Activated CD8-positive, alpha-beta T cell treated with anti-CD3 and anti-CD28 coated beads, Interleukin-2, amount 10 ng/mL, durations not matched to agents 7 days and 5 days (primary cell): ENCODE measurements at regions of chr12 and their contacts with region 1.

Region 1: DNA sequence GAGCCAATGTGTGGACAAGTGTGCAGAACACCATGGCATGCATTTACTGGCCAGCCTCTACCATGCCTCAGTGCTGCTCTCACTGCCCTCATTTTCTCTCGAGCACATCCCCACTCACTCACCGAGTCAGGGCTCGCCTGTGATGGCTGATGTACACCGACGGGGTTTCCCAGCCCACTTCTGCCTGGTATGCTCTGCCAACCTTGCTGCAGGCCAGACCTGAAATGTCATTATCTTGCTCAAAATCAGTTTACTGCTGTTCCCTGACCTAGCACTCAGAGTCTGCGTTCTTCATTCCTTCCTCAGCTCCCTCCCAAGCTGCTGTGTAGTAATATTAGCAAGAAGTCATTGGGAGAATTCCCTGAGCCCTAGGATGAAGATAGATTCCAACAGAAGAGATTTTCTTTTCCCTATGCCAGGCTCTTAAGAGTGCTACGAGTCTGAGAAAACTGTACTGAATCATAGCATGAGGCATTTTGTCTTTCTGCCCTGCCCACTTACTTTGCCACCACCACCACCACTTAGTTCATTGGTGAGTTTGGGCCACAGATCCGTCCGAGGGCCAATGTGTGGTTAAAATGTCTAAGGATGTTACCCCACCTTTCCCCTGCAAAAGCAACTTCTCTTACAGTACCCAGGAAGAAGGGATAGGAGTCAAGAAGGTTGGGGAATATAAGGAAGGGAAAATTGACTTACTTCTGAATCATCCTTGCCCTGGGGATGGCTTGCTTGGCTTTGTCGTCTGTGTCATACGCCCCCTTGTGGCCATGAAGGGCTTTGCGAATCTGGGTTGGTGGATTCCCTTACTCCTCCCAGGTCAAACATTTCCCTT is 51.0 kb downstream of the BMAL2 start:
- DNase-seq: peak; percentile 80
- ATAC-seq: peak; percentile 76
- H3K4me3 Mint-ChIP-seq: no peak overlapping the region
- H3K27ac Mint-ChIP-seq: no peak overlapping the region
- H3K4me1 Mint-ChIP-seq: no peaks in the 10 kb centered on the region
- H3K27me3 Mint-ChIP-seq: no peaks in the 10 kb centered on the region

Region 2: GRCh38 chr12:27367078-27367477 is 16.6 kb before region 1 on chr12:
- CTCF ChIA-PET with region 1: interaction called, 14 read pairs
- POLR2A ChIA-PET with region 1: interaction called, 3 read pairs
- DNase-seq: no peak
- ATAC-seq: no peak
- H3K4me3 Mint-ChIP-seq: no peak overlapping the region
- H3K27ac Mint-ChIP-seq: no peak overlapping the region
- H3K4me1 Mint-ChIP-seq: no peaks in the 10 kb centered on the region
- H3K27me3 Mint-ChIP-seq: peaks cover 12% of the 10 kb centered on the region